ENCODE measurements at regions of chr17 and their contacts with region 1.

Region 1: GRCh38 chr17:40358323-40359038 is 6.1 kb downstream of the GJD3 start:
- DNase-seq: peak; percentile 96
- ATAC-seq: peak; percentile 74

Region 2: DNA sequence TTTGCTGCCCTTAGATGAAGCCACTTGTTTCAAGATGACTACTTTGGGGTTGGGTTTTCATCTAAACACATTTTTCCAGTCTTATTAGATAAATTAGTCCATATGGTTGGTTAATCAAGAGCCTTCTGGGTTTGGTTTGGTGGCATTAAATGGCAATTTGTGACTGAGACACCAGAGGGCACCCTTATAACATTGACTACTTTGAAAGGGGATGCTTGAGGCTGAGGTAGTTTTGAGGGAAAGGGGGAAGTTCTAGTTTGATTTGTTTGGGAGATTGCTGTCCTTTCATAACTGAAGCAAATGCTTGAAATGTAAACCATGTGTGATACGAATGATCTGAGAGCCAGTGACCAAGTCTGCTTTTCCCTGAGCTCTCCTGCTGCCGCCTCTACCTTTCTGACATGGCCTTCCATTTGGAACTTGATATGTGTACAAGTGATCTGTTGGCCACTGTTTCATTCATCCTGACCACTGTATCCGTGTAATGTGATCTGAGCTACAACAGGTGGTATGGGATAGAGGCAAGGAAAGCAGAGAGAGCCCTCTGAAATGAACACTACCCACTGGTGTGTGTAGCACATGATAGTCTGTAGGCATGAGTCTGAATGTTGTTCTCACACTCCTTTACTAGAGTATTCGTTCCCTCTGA is 55.3 kb before region 1 on chr17:
- intact Hi-C with region 1: loop called (anchors 1 kb)
- DNase-seq: no peak
- ATAC-seq: peak; percentile 71

Region 3: GRCh38 chr17:40399185-40399584 is 40.7 kb after region 1 on chr17:
- intact Hi-C with region 1: loop called (anchors 5 kb)
- DNase-seq: no peak
- ATAC-seq: peak; percentile 28

Region 4: GRCh38 chr17:40417609-40418427 is 59.3 kb after region 1 on chr17 and contains the start of gene TOP2A:
- intact Hi-C with region 1: loop called (anchors 1 kb)
- DNase-seq: peak; percentile 92
- ATAC-seq: peak; percentile 99
- total RNA-seq, gene TOP2A: 3.0 TPM

Region 5: GRCh38 chr17:40443583-40444327 is 85.3 kb after region 1 on chr17:
- intact Hi-C with region 1: no loop called
- DNase-seq: peak; percentile 92
- ATAC-seq: peak; percentile 51

Region 6: DNA sequence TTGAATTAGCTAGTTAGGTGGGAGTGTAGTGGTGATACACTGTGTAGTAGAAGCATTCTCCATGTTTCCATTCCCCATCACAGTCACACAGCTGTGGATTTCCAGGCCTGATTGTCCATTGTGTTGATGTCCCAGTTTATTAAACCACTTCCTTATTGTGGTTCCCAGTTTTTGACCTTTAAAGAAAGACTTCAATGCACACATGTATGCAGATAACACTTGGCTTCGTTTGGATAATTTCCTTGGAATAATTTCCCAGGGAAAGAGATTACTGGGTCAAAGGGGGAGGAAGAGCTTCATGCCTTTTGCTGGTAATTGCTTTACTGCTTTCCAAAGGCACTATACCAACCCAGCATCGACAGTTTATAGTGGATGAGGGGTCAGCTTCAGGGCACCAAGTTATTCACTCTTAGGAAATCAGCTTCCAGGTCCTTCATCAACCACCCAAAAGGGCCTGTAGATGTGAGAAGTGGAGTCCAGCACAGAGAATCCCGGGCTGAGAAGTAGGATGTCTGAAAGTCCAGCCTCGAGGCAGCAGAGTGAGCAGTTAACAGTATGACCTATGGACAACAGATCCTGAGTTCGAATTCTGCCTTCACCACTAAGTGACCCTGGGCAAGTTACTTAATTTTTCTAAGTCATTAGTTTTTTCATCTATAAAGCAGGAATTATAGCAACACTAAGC is 174.2 kb after region 1 on chr17:
- intact Hi-C with region 1: loop called (anchors 2 kb)
- DNase-seq: no peak
- ATAC-seq: peak; percentile 30